CD4-positive, alpha-beta T cell (primary cell): ENCODE measurements at regions of chr1 and their contacts with region 1.

Region 1: DNA sequence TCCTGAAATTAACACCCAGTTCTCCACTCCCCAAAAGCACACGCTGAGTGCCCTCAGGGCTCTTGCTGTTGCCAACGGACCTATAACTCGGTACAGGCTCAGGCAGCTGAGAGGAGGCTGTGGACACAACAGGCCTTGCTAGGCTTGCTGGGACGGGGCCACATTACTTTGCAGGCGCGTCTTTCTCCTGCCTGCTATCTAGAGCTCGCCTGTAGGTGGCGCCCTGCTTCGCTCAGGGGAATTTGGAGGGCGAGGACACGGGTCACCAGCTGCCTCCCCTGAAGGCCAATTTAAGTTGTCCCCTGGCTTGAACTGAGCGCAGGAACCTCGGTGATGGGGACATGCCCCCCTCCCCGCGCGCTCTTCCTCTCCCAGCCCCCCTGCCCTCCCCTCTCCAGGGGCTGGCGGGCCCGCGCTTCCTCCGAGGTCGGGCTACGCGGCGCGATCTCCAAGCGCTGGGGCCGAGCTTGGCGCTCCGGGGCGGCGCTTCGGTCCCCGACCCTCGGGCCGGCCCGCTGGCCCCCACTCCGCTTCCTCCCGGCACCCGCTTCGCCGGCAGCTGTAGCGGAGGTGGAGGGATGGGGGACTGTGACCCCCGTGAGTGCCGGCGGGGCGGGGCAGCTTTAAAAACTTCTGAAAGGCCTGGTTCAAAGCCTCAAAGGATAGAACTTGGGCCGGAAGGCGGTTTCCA is 32.4 kb upstream of the NFIA start:
- DNase-seq: peak; percentile 75 to 93 (median 88)
- ATAC-seq: peak; percentile 84
- H3K4me3 ChIP-seq: peak overlapping the region; percentile 61
- H3K4me3 Mint-ChIP-seq: peak overlapping the region; percentile 86
- H3K27ac ChIP-seq: no peak overlapping the region
- H3K27ac Mint-ChIP-seq: no peak overlapping the region
- H3K4me1 ChIP-seq: peaks cover 36% of the 10 kb centered on the region
- H3K4me1 Mint-ChIP-seq: peaks cover 42% of the 10 kb centered on the region
- H3K27me3 ChIP-seq: peaks cover 34 to 41% of the 10 kb centered on the region in 2 experiments
- H3K27me3 Mint-ChIP-seq: peaks cover 62% of the 10 kb centered on the region
- CTCF ChIP-seq: peak; percentile 93

Region 2: DNA sequence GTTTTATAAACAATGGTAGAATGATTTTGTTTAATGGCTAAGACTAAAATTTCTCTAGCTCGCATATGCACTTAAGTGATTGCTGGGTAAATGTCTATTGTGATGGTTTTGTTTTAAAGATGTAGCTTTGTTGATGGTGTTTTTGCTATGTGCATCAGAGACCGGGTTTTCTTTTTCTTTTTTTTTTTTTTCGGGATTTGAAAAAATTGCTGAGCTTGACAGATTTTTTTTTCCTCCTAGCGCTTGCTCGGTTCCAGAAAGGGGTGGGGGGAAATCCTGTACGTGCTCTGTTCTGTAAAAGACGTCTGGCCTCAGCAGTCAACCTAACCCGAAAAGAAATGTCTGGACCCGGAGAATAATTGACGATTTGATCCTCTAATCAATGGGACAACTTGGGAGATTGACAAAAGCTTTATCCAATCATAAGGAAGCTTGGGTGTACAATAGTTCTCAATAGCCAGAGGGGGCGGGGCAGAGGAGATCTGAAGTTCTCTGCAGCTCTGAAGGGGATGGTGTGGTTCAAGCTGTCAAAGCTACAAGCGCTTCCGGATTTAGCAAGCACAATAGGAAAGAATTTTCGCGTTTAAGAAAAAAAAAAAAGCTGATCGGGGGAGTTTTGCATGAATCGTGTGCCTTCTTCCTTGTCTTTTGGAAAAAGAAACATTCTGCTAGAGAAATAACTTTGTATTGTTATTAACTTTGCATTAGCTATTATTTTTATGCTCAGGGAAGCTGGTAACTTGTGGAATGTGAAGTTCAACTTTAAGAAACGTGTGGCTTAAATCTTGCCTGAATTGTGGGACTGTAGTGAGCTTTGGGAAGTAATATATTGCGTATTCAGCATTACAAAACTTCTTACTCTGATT is 27.9 kb after region 1 on chr1:
- CTCF ChIA-PET with region 1: interaction called, 29 read pairs
- POLR2A ChIA-PET with region 1: interaction called, 84 read pairs
- intact Hi-C with region 1: loop called (anchors 1 to 2 kb)
- DNase-seq: peak; percentile 76 to 99 (median 88)
- ATAC-seq: peak; percentile 71
- H3K4me3 ChIP-seq: peak overlapping the region; percentile 57
- H3K4me3 Mint-ChIP-seq: peak overlapping the region; percentile 88
- H3K27ac ChIP-seq: peak overlapping the region; percentile 29 to 78
- H3K27ac Mint-ChIP-seq: peak overlapping the region; percentile 87
- H3K4me1 ChIP-seq: peaks cover 39% of the 10 kb centered on the region
- H3K4me1 Mint-ChIP-seq: peaks cover 50% of the 10 kb centered on the region
- H3K27me3 ChIP-seq: no peaks in the 10 kb centered on the region
- H3K27me3 Mint-ChIP-seq: no peaks in the 10 kb centered on the region
- CTCF ChIP-seq: no peak

Region 3: DNA sequence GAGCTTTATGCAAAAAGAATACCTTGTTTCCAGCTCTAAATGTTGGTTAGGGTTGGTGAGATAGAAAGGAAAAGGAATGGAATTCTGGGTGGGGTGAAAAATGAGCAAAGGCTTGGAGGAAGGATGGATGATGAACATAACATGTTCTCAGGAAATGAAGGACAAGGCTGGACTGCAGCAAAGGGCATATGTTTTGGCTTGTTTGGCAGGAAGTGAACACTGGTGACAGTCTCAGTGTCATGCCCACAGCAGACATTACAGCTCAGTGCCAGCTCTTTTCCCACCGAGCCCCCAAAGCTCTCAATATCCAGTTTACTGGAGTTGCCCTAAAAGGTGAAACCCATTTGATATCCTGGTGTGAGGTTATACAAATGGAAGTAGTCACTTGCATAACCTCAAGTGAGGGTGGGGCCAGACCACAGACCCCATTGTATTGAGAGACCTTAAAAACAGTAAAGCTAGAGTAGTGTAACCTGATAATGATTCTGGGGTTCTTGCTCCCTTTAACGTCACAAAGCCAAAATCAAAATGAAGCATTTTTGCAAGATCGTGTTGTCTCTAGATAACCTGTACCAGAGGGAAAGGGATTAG is 302.9 kb after region 1 on chr1:
- CTCF ChIA-PET with region 1: no interaction called
- POLR2A ChIA-PET with region 1: no interaction called
- intact Hi-C with region 1: loop called in 1 of 2 experiments (anchors 10 kb)
- DNase-seq: no peak
- ATAC-seq: no peak
- H3K4me3 ChIP-seq: no peak overlapping the region
- H3K4me3 Mint-ChIP-seq: no peak overlapping the region
- H3K27ac ChIP-seq: no peak overlapping the region
- H3K27ac Mint-ChIP-seq: no peak overlapping the region
- H3K4me1 ChIP-seq: no peaks in the 10 kb centered on the region
- H3K4me1 Mint-ChIP-seq: no peaks in the 10 kb centered on the region
- H3K27me3 ChIP-seq: no peaks in the 10 kb centered on the region
- H3K27me3 Mint-ChIP-seq: no peaks in the 10 kb centered on the region
- CTCF ChIP-seq: no peak

Region 4: GRCh38 chr1:61588736-61589672 is 539.0 kb after region 1 on chr1:
- CTCF ChIA-PET with region 1: interaction called, 6 read pairs
- POLR2A ChIA-PET with region 1: no interaction called
- intact Hi-C with region 1: loop called (anchors 1 to 5 kb)
- DNase-seq: peak; percentile 13 to 67 (median 35)
- ATAC-seq: peak; percentile 56
- H3K4me3 ChIP-seq: no peak overlapping the region
- H3K4me3 Mint-ChIP-seq: no peak overlapping the region
- H3K27ac ChIP-seq: no peak overlapping the region
- H3K27ac Mint-ChIP-seq: no peak overlapping the region
- H3K4me1 ChIP-seq: no peaks in the 10 kb centered on the region
- H3K4me1 Mint-ChIP-seq: no peaks in the 10 kb centered on the region
- H3K27me3 ChIP-seq: no peaks in the 10 kb centered on the region
- H3K27me3 Mint-ChIP-seq: no peaks in the 10 kb centered on the region
- CTCF ChIP-seq: peak; percentile 71

Region 5: GRCh38 chr1:61732726-61733125 is 682.7 kb after region 1 on chr1:
- CTCF ChIA-PET with region 1: no interaction called
- POLR2A ChIA-PET with region 1: no interaction called
- intact Hi-C with region 1: loop called in 1 of 2 experiments (anchors 10 kb)
- DNase-seq: no peak
- ATAC-seq: no peak
- H3K4me3 ChIP-seq: no peak overlapping the region
- H3K4me3 Mint-ChIP-seq: no peak overlapping the region
- H3K27ac ChIP-seq: no peak overlapping the region
- H3K27ac Mint-ChIP-seq: no peak overlapping the region
- H3K4me1 ChIP-seq: peaks cover 7% of the 10 kb centered on the region
- H3K4me1 Mint-ChIP-seq: peaks cover 5% of the 10 kb centered on the region
- H3K27me3 ChIP-seq: no peaks in the 10 kb centered on the region
- H3K27me3 Mint-ChIP-seq: no peaks in the 10 kb centered on the region
- CTCF ChIP-seq: no peak

Region 6: GRCh38 chr1:62783723-62784508 is 1733.9 kb after region 1 on chr1 and contains the start of gene ATG4C:
- CTCF ChIA-PET with region 1: no interaction called
- POLR2A ChIA-PET with region 1: no interaction called
- intact Hi-C with region 1: loop called in 1 of 2 experiments (anchors 10 kb)
- DNase-seq: peak; percentile 83 to 97 (median 88)
- ATAC-seq: peak; percentile 96
- H3K4me3 ChIP-seq: peak within 1 kb of the TSS; percentile 63
- H3K4me3 Mint-ChIP-seq: no peak within 1 kb of the TSS
- H3K27ac ChIP-seq: peak within 1 kb of the TSS; percentile 85 to 88
- H3K27ac Mint-ChIP-seq: no peak within 1 kb of the TSS
- H3K4me1 ChIP-seq: peaks cover 10% of the 10 kb centered on the region
- H3K4me1 Mint-ChIP-seq: peaks cover 14% of the 10 kb centered on the region
- H3K27me3 ChIP-seq: no peaks in the 10 kb centered on the region
- H3K27me3 Mint-ChIP-seq: peaks cover 4% of the 10 kb centered on the region
- CTCF ChIP-seq: no peak
- total RNA-seq, gene ATG4C: 4.2 to 4.6 TPM